HepG2 (cell line): ENCODE measurements at regions of chr12 and their contacts with region 1.

Region 1: GRCh38 chr12:6195665-6196535 is 4.3 kb upstream of the CD9 start:
- DNase-seq: peak; percentile 70
- ATAC-seq: peak; percentile 82
- H3K4me3 ChIP-seq: peak overlapping the region in 2 of 3 experiments; percentile 18 to 47; a peak in 3 of 6 replicates
- H3K27ac ChIP-seq: peak overlapping the region; percentile 12
- H3K4me1 ChIP-seq: peaks cover 54% of the 10 kb centered on the region
- H3K27me3 ChIP-seq: peaks cover 7 to 29% of the 10 kb centered on the region in 2 experiments
- CTCF ChIP-seq: peak; percentile 95
- EP300 ChIP-seq: no peak
- POLR2A ChIP-seq: no peak
- RAD21 ChIP-seq: peak; percentile 87

Region 2: DNA sequence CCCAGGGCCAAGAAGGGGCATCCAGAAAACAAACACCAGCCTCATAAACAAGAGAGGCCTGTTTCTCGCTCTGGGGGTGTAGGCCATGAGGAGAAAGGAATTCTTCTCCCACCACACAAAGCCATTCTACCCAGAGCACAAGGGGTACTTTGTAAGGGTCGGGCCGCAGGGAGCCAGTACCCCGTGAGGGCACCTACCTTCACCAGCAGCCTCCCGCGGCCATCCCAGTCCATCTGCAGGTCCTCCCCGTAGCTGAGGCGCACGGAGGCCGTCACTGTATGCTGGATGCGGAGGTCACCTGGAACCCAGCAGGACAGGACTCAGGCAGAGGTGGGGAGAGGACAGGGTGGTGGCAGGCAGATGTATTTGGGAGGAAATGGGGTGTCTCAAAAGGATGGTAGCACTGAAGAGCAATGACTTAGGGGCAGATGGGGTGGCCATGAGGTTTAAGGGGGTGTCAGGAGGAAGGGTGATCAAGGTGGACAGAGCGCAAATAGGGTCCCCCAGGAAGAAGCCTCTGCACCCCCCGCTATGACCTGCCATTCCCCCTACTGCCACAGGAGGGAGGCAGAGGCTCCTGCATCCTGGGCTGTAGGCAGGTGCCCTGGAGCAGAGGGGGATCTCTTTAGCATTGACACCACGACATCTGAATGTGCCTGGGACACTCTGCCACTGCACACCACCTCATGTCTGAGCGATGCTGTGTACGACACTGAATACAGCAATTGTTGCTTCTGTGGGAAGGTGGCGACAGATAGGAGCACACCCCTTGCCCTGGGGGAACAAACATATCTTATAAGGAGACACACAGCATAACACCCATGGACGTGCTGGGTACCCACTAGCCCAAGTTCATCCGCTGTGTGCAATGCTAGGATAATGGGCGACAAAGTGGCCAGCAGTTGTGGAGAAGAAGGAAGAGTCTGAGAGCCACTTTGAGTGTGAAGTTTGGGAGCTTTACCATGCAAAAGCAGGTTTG is 132.9 kb before region 1 on chr12:
- CTCF ChIA-PET with region 1: no interaction called
- POLR2A ChIA-PET with region 1: interaction called, 3 read pairs
- in situ Hi-C with region 1: no loop called
- intact Hi-C with region 1: loop called (anchors 1 kb)
- DNase-seq: peak; percentile 24
- ATAC-seq: peak; percentile 73
- H3K4me3 ChIP-seq: peak overlapping the region in 1 of 3 experiments; percentile 42; a peak in 1 of 6 replicates
- H3K27ac ChIP-seq: no peak overlapping the region
- H3K4me1 ChIP-seq: peaks cover 54% of the 10 kb centered on the region
- H3K27me3 ChIP-seq: peaks cover 0 to 15% of the 10 kb centered on the region in 2 experiments; a peak in 2 of 5 replicates
- CTCF ChIP-seq: peak; percentile 95
- EP300 ChIP-seq: no peak
- POLR2A ChIP-seq: no peak
- RAD21 ChIP-seq: peak; percentile 89

Region 3: GRCh38 chr12:6182116-6182898 is 13.6 kb before region 1 on chr12:
- CTCF ChIA-PET with region 1: no interaction called
- POLR2A ChIA-PET with region 1: interaction called, 13 read pairs
- in situ Hi-C with region 1: no loop called
- intact Hi-C with region 1: no loop called
- DNase-seq: peak; percentile 75
- ATAC-seq: peak; percentile 76
- H3K4me3 ChIP-seq: peak overlapping the region; percentile 43 to 70 (median 45); a peak in 5 of 6 replicates
- H3K27ac ChIP-seq: peak overlapping the region; percentile 79
- H3K4me1 ChIP-seq: peaks cover 73% of the 10 kb centered on the region
- H3K27me3 ChIP-seq: peaks cover 0 to 5% of the 10 kb centered on the region in 2 experiments; a peak in 1 of 5 replicates
- CTCF ChIP-seq: no peak
- EP300 ChIP-seq: no peak
- POLR2A ChIP-seq: peak; percentile 39 to 63; a peak in 3 of 4 replicates
- RAD21 ChIP-seq: no peak

Region 4: DNA sequence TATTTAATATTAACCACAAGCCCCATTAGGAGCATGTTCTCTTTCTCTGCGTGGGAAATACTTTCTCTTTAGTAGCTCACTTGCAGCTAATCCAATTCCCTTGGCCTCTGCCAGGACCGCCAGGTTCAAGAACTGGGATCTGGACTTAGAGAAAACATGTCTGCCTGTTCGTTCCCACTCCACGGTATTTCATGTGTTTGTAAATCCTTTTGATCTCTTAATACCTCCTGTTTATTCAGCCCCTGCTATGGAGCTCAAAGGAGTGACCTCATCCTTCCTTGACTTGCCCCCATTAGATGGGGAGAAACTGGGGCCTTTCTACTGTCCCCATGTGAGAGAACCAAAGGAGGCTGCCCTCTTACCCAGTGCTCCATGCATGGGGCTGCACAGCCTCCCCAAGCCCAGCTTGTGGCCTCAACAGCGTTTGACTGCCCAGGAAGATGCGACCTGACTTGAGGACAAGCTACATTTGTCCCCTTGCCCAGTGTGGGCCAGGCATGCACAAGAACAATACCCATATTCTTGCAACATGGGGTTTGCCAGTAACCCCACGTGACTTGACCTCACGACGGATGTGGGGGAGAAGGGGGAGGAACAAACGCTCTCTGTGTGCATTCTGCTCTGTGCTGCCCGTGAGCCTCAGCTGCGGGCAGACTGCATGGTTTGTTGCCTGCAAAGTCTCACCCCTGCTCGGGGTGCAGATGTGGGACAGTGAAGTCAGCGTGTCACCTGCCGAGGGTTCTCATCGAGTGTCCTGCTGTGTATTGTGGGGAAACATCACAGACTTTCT is 34.6 kb after region 1 on chr12:
- CTCF ChIA-PET with region 1: no interaction called
- POLR2A ChIA-PET with region 1: interaction called, 7 read pairs
- in situ Hi-C with region 1: loop called (anchors 5 kb)
- intact Hi-C with region 1: loop called (anchors 1 kb)
- DNase-seq: peak; percentile 92
- ATAC-seq: peak; percentile 76
- H3K4me3 ChIP-seq: 0 out of 6 replicates have a peak overlapping the region, but pooled peaks of 1 of the 3 experiments have one; percentile 8
- H3K27ac ChIP-seq: peak overlapping the region; percentile 69
- H3K4me1 ChIP-seq: peaks cover 97% of the 10 kb centered on the region
- H3K27me3 ChIP-seq: no peaks in the 10 kb centered on the region
- CTCF ChIP-seq: 0 out of 2 replicates have a peak, but pooled peaks have one; percentile 3
- EP300 ChIP-seq: peak in 1 of 2 experiments; percentile 59; a peak in 2 of 4 replicates
- POLR2A ChIP-seq: peak in 1 of 2 experiments; percentile 39; a peak in 2 of 4 replicates
- RAD21 ChIP-seq: peak; percentile 13; the same call in 1 of the 2 replicates

Region 5: DNA sequence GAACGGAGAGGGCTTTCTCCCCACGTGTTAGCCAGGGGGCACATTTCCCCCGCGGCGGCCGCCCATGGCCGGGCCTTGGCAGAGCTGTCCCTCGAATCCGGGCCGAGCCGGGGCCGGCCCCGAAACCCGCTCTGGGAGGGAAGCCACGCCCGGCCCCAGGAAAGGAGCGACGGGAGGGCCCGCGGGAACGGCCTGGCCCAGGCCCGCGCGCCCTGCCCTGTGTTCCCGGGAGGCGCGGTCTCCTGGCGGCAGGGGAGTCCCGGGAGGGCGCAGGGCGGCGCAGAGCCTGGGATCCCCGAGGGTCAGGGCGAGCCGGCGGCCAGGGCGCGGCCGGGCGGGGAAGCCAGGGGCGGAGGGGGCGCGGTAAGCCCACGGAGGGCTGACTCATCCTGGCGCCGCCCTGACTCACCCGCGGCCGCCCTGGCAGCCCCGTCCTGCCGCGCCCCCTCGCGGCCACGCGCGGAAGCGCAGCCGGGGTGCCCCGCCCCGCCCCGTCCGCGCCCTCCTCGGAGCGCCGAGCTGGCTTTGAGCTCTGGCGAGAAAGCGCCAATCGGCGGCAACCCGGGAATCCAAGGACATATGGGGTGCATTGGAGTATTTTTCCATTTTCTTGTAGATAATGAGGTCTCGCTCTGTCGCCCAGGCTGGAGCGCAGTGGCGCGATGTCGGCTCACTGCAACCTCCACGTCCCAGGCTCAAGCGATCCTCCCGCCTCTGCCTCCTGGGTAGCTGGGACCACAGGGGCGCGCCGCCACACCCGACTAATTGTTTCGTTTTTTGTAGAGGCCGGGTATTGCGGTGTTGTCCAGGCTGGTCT is 82.7 kb after region 1 on chr12:
- CTCF ChIA-PET with region 1: interaction called, 49 read pairs
- POLR2A ChIA-PET with region 1: interaction called, 19 read pairs
- in situ Hi-C with region 1: loop called (anchors 5 kb)
- intact Hi-C with region 1: loop called (anchors 1 kb)
- DNase-seq: peak; percentile 69
- ATAC-seq: peak; percentile 86
- H3K4me3 ChIP-seq: peak overlapping the region; percentile 51 to 71 (median 52); a peak in 5 of 6 replicates
- H3K27ac ChIP-seq: peak overlapping the region; percentile 75
- H3K4me1 ChIP-seq: peaks cover 85% of the 10 kb centered on the region
- H3K27me3 ChIP-seq: peaks cover 0 to 17% of the 10 kb centered on the region in 2 experiments; a peak in 4 of 5 replicates
- CTCF ChIP-seq: peak; percentile 73
- EP300 ChIP-seq: peak in 1 of 2 experiments; percentile 35; a peak in 2 of 4 replicates
- POLR2A ChIP-seq: peak in 1 of 2 experiments; percentile 51; a peak in 2 of 4 replicates
- RAD21 ChIP-seq: peak; percentile 99

Region 6: DNA sequence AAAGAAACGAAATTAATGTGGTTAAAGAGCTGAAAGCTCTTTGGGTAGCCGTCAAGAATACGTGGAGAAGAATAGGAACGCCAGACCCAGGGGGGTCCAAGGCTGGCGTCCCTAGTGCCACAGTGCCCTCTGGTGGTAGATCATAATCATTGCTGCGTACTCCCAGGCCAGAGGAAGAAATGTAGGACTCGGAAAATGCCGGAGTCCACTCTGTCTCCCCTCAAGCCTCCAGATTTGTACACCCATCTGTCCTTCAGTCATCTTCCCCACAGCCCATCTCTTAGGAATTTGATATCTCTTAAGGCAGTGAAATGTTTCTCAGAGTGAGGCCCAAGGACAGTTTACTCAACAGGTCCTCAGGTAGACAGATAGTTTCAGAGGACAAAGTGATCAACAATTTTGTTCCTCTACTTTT is 89.2 kb after region 1 on chr12:
- CTCF ChIA-PET with region 1: interaction called, 49 read pairs
- POLR2A ChIA-PET with region 1: interaction called, 19 read pairs
- in situ Hi-C with region 1: no loop called
- intact Hi-C with region 1: loop called (anchors 1 kb)
- DNase-seq: peak; percentile 70
- ATAC-seq: peak; percentile 78
- H3K4me3 ChIP-seq: no peak overlapping the region
- H3K27ac ChIP-seq: no peak overlapping the region
- H3K4me1 ChIP-seq: peaks cover 63% of the 10 kb centered on the region
- H3K27me3 ChIP-seq: no peaks in the 10 kb centered on the region
- CTCF ChIP-seq: peak; percentile 92
- EP300 ChIP-seq: no peak
- POLR2A ChIP-seq: no peak
- RAD21 ChIP-seq: peak; percentile 95

Region 7: DNA sequence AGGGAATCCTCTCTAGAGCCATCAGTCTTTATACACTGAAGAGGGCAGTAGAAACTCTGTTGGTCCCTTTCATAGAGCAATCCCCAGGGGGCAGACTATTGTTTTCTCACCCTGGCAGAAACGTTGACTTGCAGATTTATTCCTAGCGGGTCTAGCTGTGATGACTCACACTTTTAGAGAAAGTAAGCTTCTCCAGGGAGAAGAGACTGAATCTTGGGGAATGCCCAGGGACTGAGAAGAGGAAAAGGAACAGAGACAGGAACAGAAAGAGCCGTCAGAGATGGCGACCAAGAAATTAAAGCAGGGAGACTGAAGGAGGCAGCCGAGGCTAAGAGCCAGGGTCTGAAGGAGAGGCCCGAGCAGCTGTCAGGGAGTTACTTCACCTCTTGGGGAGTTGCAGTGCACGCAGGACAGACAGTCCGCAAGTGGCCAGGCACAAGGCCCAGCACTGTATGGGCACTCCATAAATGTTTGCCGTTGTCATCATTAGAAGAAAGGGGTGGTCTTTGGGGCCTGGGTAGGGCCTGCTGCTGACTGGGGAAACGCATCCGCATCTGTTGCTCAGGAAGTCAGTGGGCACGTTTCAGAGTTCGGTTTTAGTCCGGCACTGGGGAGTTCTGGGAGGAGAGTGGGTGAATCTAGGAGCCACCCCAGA is 127.6 kb after region 1 on chr12:
- CTCF ChIA-PET with region 1: no interaction called
- POLR2A ChIA-PET with region 1: no interaction called
- in situ Hi-C with region 1: no loop called
- intact Hi-C with region 1: no loop called
- DNase-seq: peak; percentile 78
- ATAC-seq: peak; percentile 67
- H3K4me3 ChIP-seq: no peak overlapping the region
- H3K27ac ChIP-seq: peak overlapping the region; percentile 37
- H3K4me1 ChIP-seq: peaks cover 46% of the 10 kb centered on the region
- H3K27me3 ChIP-seq: no peaks in the 10 kb centered on the region
- CTCF ChIP-seq: peak; percentile 58
- EP300 ChIP-seq: no peak
- POLR2A ChIP-seq: no peak
- RAD21 ChIP-seq: peak; percentile 48; the same call in 1 of the 2 replicates